Astrocyte of the cerebellum (primary cell): ENCODE measurements at regions of chr2 and their contacts with region 1.

Region 1: GRCh38 chr2:227884511-227884947 is 13.1 kb downstream of the DAW1 start:
- DNase-seq: no peak
- H3K4me3 ChIP-seq: no peak overlapping the region
- CTCF ChIP-seq: peak; percentile 91

Region 2: DNA sequence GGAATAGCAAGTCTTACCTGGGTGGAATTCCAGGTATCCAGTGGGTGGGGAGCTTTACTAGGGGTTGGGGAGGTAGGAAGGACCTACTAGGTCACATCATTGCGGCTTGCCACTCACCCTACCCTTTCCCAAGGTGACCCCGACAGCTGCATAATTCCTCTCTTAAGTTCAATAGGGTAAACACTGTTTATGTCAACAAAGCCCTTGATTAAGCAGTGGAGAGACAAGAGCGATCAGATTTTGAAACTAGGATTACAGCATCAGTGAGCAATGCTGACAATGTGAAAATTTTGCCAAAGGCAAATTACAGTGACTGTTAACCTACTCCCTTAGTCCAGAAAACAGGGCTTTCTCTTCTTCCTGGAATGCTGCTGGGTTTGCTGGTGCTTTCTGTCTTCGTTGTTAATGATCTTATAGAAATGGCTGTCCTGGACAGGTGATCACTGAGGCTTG is 181.2 kb before region 1 on chr2:
- in situ Hi-C with region 1: no loop called
- DNase-seq: no peak
- H3K4me3 ChIP-seq: no peak overlapping the region
- CTCF ChIP-seq: no peak

Region 3: GRCh38 chr2:228094377-228094921 is 209.9 kb after region 1 on chr2:
- in situ Hi-C with region 1: no loop called
- DNase-seq: no peak
- H3K4me3 ChIP-seq: no peak overlapping the region
- CTCF ChIP-seq: no peak

Region 4: DNA sequence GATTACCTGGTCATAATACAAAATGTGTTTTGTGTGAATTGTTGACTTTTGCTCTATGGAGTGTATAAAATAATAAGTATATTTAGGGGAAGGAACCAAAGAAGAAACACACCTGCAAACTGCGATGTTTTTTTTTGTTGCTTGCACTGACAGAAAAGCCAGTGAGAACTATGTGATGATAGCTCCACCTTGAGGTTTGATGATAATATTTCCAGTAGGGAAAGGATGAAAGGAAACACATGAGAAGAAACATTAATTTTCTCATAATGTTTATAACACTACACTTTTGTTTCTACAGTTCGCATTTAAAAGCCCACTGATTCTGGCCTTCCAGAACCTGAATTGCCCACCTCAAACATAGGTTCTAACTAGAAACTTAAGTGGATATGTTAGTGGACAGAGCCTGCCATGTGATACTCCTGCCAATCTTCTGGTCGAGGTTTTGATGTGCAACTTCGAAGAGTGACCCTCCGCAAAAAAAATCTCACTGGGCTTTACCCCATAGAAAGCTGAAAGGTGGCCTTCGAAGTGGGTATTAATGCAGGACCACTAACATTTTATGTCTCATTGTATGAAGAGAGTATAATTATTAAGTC is 773.4 kb after region 1 on chr2:
- in situ Hi-C with region 1: loop called (anchors 25 kb)
- DNase-seq: peak; percentile 22
- H3K4me3 ChIP-seq: no peak overlapping the region
- CTCF ChIP-seq: peak; percentile 29